ENCODE measurements at regions of chrX and their contacts with region 1.

Region 1: DNA sequence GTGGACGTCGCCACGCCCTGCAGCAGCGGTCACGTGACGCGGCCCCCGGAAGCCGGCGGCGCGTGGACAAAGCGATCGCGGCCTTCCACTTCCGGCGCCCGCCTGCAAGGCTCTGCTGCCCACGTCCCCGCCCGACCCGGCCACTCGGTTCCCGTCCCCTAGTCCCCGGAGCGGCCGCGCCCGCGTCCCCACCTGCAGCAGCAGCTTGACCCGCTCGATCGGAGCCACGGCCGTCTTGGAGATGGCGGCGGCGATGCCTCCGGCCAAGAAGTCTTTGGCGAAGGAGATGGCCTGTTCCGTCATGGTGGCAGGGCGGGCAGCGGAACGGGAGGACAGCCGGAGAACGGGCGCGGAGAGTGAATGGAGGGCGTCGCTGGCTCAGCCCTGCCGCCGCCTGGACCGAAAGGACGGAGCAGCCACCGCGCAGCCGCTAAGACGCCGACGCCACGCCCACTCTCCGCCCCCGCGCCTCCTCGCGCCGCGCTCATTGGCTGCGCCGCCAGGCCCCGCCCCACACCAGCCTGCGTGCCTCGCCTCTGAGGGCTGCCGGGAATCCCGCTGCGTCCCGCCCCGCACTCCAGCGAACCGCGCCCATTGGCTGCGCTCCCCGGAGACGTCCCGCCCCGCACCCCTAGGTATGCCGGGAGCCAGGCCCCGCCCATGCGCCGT is at the start of gene SLC25A6:
- DNase-seq: peak; percentile 100
- H3K4me3 Mint-ChIP-seq: peak within 1 kb of the TSS; percentile 84
- H3K27ac Mint-ChIP-seq: peak within 1 kb of the TSS; percentile 96
- H3K4me1 Mint-ChIP-seq: peaks cover 57% of the 10 kb centered on the region
- H3K27me3 Mint-ChIP-seq: no peaks in the 10 kb centered on the region
- total RNA-seq, gene SLC25A6: 399 to 407 TPM

Region 2: DNA sequence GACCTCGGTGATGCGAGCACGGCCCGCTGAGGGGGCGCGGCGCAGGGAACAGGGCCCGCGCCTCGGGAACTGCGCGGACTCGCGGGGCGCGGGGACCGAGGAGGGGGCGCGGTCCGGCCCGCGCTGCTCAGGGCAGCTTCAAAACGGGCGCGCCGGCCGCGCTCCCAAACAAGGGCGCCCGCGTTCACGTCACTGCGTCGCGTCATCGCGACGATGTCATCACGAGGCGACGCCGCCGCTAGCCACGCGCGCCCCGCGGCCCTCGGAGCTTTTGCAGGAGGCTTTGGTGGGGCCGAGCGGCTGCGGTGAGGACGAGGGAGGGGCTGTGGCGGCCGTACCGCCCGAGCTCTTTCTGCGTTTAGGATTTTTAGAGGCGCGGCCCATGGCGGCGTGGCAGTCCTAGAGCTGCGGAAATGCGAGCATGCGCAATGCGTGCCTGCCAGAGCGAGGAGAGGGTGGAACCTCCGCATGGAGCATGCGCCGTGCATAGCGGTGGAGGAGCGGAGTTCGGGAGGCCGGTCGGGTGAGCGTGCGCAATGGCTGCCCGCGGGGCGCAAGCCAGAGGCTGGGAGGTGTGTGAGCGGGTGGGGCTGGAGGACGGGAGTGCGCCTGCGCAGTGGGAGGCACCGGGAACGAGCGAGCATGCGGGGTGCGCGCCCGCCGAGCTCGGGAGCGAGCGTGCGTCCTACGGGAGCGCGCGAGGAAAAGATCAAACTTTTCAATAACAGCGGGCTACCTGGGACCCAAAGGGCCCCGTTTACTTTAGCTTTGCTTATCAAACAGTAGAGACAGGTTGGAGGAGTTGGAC is 1004.9 kb before region 1 on chrX and contains the start of gene PPP2R3B:
- CTCF ChIA-PET with region 1: no interaction called
- POLR2A ChIA-PET with region 1: no interaction called
- intact Hi-C with region 1: loop called (anchors 10 kb)
- DNase-seq: peak; percentile 99
- H3K4me3 Mint-ChIP-seq: peak within 1 kb of the TSS; percentile 90
- H3K27ac Mint-ChIP-seq: peak within 1 kb of the TSS; percentile 99
- H3K4me1 Mint-ChIP-seq: peaks cover 7% of the 10 kb centered on the region
- H3K27me3 Mint-ChIP-seq: peaks cover 3% of the 10 kb centered on the region
- total RNA-seq, gene PPP2R3B: 31.7 to 32.2 TPM

Region 3: DNA sequence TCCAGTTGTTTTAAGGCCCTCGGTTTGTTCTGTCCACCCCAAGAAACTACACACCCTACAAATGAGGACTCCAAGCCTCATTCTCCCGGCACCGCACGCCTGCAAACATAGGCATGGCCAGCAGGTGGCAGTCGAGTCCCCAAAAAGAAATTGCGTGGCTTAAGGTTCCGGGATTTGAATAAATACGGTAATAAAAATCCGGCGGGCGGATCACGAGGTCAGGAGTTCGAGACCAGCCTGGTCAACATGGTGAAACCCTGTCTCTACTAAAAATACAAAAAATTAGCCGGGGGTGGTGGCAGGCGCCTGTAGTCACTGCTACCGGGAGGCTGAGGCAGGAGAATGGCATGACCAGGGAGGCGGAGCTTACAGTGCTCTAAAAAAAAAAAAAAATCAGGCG is 145.0 kb before region 1 on chrX:
- CTCF ChIA-PET with region 1: no interaction called
- POLR2A ChIA-PET with region 1: no interaction called
- intact Hi-C with region 1: loop called (anchors 5 kb)
- DNase-seq: peak; percentile 91
- H3K4me3 Mint-ChIP-seq: no peak overlapping the region
- H3K27ac Mint-ChIP-seq: peak overlapping the region; percentile 69
- H3K4me1 Mint-ChIP-seq: peaks cover 29% of the 10 kb centered on the region
- H3K27me3 Mint-ChIP-seq: no peaks in the 10 kb centered on the region

Region 4: GRCh38 chrX:1453951-1454785 is 62.3 kb after region 1 on chrX:
- CTCF ChIA-PET with region 1: no interaction called
- POLR2A ChIA-PET with region 1: no interaction called
- intact Hi-C with region 1: loop called (anchors 1 kb)
- DNase-seq: peak; percentile 95
- H3K4me3 Mint-ChIP-seq: peak overlapping the region; percentile 52
- H3K27ac Mint-ChIP-seq: peak overlapping the region; percentile 64
- H3K4me1 Mint-ChIP-seq: peaks cover 19% of the 10 kb centered on the region
- H3K27me3 Mint-ChIP-seq: no peaks in the 10 kb centered on the region

Region 5: DNA sequence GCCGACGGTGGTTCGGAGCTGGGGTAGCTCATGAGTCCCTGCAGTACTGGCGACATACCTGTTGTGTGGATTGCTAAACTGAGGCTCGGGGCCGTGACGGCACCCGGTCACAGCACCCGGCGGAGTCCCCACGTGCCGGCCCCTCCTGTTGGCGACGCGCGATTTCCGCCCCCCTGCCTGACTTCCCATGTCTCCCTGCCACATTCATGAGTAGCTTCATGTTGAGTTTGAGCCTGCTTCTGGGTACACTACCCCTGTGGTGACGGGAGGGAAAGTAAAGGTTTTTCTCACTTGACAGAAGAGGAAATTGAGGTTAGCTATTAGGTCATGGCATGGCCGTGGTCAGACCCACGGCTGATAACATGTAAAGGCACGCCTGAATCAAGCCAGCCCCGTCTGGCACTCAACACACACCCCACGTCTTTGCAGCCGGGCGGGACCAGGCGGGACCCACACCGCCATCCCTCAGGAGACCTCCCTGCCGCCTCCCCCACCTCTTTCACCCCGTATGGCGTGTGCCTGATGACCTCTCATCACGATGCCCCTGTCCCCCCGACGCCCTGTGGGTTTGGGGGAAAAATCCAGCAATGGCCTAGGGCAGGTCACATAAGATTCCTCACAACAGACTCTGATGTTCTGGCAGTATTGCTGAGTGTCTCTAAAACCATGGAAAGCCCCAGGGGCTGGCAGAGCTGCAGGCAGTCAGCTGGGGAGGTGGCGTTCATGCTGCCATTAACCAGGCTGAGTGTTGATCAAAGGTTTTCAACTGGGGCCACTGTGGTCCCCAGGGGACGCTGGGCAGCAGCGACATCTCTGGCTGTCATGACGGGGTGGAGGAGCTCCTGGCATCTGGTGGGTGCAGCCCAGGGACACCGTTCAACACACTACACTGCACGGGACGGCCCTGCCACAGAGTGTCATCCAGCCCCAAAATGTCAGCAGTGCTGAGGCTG is 115.9 kb after region 1 on chrX:
- CTCF ChIA-PET with region 1: no interaction called
- POLR2A ChIA-PET with region 1: no interaction called
- intact Hi-C with region 1: no loop called
- DNase-seq: peak; percentile 52
- H3K4me3 Mint-ChIP-seq: no peak overlapping the region
- H3K27ac Mint-ChIP-seq: peak overlapping the region; percentile 33
- H3K4me1 Mint-ChIP-seq: peaks cover 26% of the 10 kb centered on the region
- H3K27me3 Mint-ChIP-seq: no peaks in the 10 kb centered on the region

Region 6: GRCh38 chrX:1580735-1581531 is 189.1 kb after region 1 on chrX:
- CTCF ChIA-PET with region 1: no interaction called
- POLR2A ChIA-PET with region 1: no interaction called
- intact Hi-C with region 1: loop called (anchors 1 kb)
- DNase-seq: peak; percentile 88
- H3K4me3 Mint-ChIP-seq: peak overlapping the region; percentile 50
- H3K27ac Mint-ChIP-seq: peak overlapping the region; percentile 38
- H3K4me1 Mint-ChIP-seq: peaks cover 27% of the 10 kb centered on the region
- H3K27me3 Mint-ChIP-seq: no peaks in the 10 kb centered on the region

Region 7: DNA sequence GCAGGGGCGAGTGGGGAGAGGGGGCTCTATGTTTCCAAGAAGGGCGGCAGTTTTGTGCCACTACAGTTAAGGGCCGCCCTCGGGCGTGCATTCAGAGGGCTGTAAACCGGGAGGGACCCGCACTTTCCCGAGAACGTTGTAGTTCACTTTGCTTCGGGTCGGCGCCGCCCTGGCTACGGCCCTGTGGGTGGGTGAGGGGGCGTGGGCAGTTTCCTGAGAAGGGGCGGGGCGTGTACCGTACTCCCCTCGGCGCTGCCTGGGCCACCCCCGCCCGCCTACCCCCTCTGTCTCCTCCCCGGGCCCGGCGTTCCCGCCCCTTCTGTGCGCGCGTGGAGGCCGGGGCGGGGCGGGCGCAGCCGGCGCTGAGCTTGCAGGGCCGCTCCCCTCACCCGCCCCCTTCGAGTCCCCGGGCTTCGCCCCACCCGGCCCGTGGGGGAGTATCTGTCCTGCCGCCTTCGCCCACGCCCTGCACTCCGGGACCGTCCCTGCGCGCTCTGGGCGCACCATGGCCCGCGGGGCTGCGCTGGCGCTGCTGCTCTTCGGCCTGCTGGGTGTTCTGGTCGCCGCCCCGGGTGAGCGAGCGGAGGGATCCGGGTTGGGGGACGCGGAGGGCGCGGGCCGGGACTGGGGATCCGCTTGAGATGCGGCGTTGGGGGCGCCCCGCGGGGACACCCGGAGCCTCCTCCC is 1299.2 kb after region 1 on chrX and contains the start of gene CD99:
- CTCF ChIA-PET with region 1: no interaction called
- POLR2A ChIA-PET with region 1: no interaction called
- intact Hi-C with region 1: loop called (anchors 5 kb)
- DNase-seq: peak; percentile 91
- H3K4me3 Mint-ChIP-seq: peak within 1 kb of the TSS; percentile 86
- H3K27ac Mint-ChIP-seq: peak within 1 kb of the TSS; percentile 96
- H3K4me1 Mint-ChIP-seq: peaks cover 25% of the 10 kb centered on the region
- H3K27me3 Mint-ChIP-seq: no peaks in the 10 kb centered on the region
- total RNA-seq, gene CD99: 282 to 283 TPM